CD14-positive monocyte (primary cell): ENCODE measurements at regions of chr11 and their contacts with region 1.

Region 1: GRCh38 chr11:18105802-18106574 is at the start of gene SAAL1:
- DNase-seq: peak; percentile 70 to 80 (median 77)
- H3K4me3 ChIP-seq: peak within 1 kb of the TSS; percentile 69 to 99 (median 94)
- H3K4me3 Mint-ChIP-seq: peak within 1 kb of the TSS; percentile 90 to 94
- H3K27ac ChIP-seq: peak within 1 kb of the TSS in 1 of 2 donors; percentile 64
- H3K27ac Mint-ChIP-seq: peak within 1 kb of the TSS in 5 of 7 donors; percentile 7 to 80 (median 77)
- H3K4me1 ChIP-seq: peaks cover 13% of the 10 kb centered on the region in 2 donors
- H3K4me1 Mint-ChIP-seq: peaks cover 24% of the 10 kb centered on the region
- H3K27me3 ChIP-seq: peaks cover 2 to 3% of the 10 kb centered on the region in 2 donors
- H3K27me3 Mint-ChIP-seq: peaks cover 3 to 19% (median 11%) of the 10 kb centered on the region in 3 donors
- CTCF ChIP-seq: peak; percentile 89
- polyA plus RNA-seq, gene SAAL1: 6.4 to 10.2 (median 7.6) TPM

Region 2: DNA sequence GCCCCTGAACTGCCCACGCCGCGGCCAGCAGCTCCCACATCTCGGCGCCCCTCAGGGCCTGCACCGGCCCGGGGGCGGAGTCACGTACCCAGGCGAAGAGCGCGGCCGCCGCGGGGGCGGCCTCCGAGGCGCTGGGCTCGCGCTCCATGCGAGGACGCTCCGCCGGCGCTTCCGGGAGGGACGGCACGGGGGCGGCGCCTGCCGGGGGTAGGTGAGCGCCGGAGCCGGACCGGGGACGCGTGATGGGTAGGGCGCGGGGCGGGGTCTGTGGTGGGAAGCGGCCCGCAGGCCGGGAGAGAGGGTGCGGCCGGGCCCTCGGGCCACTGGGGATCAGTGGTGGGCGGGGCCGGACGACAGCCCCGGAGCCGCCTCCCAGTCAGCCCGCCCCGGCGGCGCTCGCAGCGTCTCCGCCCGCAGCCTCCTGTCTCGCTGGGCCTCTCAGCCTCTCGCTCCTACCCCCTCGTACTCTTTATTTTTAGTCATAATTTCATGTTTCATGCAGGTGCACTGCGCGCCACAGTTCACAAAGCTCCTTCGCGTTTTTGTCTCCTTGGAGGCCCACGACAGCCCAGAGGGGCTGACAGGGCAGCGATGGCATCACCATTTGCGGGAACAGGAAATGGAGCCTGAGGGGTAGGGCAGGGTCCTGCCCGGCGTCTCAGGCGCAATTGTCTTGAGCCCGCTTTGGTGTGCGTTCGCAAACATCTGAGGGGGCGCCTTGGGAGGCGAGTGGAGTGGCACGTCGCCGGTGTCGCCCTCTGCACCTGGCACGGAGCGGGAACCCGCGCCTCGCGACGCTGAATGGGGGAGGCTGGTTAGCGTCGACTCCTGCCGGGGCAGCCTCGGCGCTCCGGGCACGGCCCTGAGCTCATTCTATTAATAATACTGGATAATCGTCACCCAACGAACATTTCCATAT is 92.9 kb before region 1 on chr11 and contains the start of gene SERGEF:
- intact Hi-C with region 1: loop called in 1 of 2 experiments (anchors 10 kb)
- DNase-seq: peak; percentile 80 to 87 (median 83)
- H3K4me3 ChIP-seq: peak within 1 kb of the TSS; percentile 89 to 97 (median 93)
- H3K4me3 Mint-ChIP-seq: peak within 1 kb of the TSS; percentile 100
- H3K27ac ChIP-seq: peak within 1 kb of the TSS; percentile 49 to 78
- H3K27ac Mint-ChIP-seq: peak within 1 kb of the TSS; percentile 85 to 99 (median 94)
- H3K4me1 ChIP-seq: peaks cover 13 to 19% of the 10 kb centered on the region in 2 donors
- H3K4me1 Mint-ChIP-seq: peaks cover 15% of the 10 kb centered on the region
- H3K27me3 ChIP-seq: peaks cover 10 to 11% of the 10 kb centered on the region in 2 donors
- H3K27me3 Mint-ChIP-seq: peaks cover 9 to 13% (median 12%) of the 10 kb centered on the region in 3 donors
- CTCF ChIP-seq: no peak
- polyA plus RNA-seq, gene SERGEF: 14.3 to 33.7 (median 33.3) TPM